Ascending aorta (tissue), 2 donors: ENCODE measurements at regions of chr3 and their contacts with region 1.

Region 1: GRCh38 chr3:150870396-150870795 is 34.8 kb downstream of the MINDY4B start:
- DNase-seq: no peak
- H3K4me3 ChIP-seq: no peak overlapping the region
- H3K27ac ChIP-seq: no peak overlapping the region
- H3K4me1 ChIP-seq: no peaks in the 10 kb centered on the region
- H3K27me3 ChIP-seq: no peaks in the 10 kb centered on the region
- CTCF ChIP-seq: no peak

Region 2: GRCh38 chr3:150538324-150539208 is 331.8 kb before region 1 on chr3:
- intact Hi-C with region 1: loop called (anchors 10 kb)
- DNase-seq: no peak
- H3K4me3 ChIP-seq: no peak overlapping the region
- H3K27ac ChIP-seq: no peak overlapping the region
- H3K4me1 ChIP-seq: peaks cover 0 to 3% of the 10 kb centered on the region in 2 donors
- H3K27me3 ChIP-seq: no peaks in the 10 kb centered on the region
- CTCF ChIP-seq: no peak

Region 3: GRCh38 chr3:150787741-150788370 is 82.5 kb before region 1 on chr3:
- intact Hi-C with region 1: loop called (anchors 2 kb)
- DNase-seq: peak in 1 of 2 donors; percentile 86
- H3K4me3 ChIP-seq: no peak overlapping the region
- H3K27ac ChIP-seq: no peak overlapping the region
- H3K4me1 ChIP-seq: no peaks in the 10 kb centered on the region
- H3K27me3 ChIP-seq: no peaks in the 10 kb centered on the region
- CTCF ChIP-seq: peak; percentile 67 to 87 (median 80)